ENCODE measurements at regions of chr1 and their contacts with region 1.

Region 1: DNA sequence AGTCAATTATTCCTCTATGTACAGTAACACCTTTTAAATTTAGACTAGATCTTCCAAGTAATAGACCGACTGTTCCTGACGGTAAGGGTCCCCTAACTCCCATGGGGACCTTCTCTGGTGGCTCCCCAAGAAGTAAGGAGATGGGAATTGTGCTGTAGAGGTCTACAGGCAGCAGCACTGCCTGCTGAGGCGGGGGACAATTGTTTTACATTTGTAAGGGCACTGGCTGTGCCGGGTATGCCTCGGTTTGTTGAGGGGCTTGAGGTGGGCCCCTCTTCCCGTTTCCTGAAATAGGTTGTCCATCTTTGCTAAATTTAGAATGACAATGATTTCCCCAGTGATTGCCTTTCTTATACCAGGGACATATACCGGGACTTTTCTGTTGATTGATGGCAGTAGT is 13.1 kb upstream of the L1TD1 start:
- DNase-seq: peak; percentile 51
- ATAC-seq: peak; percentile 61
- H3K4me3 Mint-ChIP-seq: peak overlapping the region; percentile 55
- H3K27ac Mint-ChIP-seq: peak overlapping the region; percentile 98
- H3K4me1 Mint-ChIP-seq: peaks cover 79% of the 10 kb centered on the region
- H3K27me3 Mint-ChIP-seq: no peaks in the 10 kb centered on the region
- CTCF ChIP-seq: no peak

Region 2: GRCh38 chr1:62198781-62199125 is 17.2 kb after region 1 on chr1:
- CTCF ChIA-PET with region 1: interaction called, 30 read pairs
- POLR2A ChIA-PET with region 1: interaction called, 12 read pairs
- DNase-seq: no peak
- ATAC-seq: peak; percentile 1; the same call in 1 of the 2 replicates
- H3K4me3 Mint-ChIP-seq: peak overlapping the region; percentile 76
- H3K27ac Mint-ChIP-seq: peak overlapping the region; percentile 99
- H3K4me1 Mint-ChIP-seq: peaks cover 60% of the 10 kb centered on the region
- H3K27me3 Mint-ChIP-seq: no peaks in the 10 kb centered on the region; the same call in 1 of the 2 replicates
- CTCF ChIP-seq: no peak